IMR-90 (cell line): ENCODE measurements at regions of chr9 and their contacts with region 1.

Region 1: DNA sequence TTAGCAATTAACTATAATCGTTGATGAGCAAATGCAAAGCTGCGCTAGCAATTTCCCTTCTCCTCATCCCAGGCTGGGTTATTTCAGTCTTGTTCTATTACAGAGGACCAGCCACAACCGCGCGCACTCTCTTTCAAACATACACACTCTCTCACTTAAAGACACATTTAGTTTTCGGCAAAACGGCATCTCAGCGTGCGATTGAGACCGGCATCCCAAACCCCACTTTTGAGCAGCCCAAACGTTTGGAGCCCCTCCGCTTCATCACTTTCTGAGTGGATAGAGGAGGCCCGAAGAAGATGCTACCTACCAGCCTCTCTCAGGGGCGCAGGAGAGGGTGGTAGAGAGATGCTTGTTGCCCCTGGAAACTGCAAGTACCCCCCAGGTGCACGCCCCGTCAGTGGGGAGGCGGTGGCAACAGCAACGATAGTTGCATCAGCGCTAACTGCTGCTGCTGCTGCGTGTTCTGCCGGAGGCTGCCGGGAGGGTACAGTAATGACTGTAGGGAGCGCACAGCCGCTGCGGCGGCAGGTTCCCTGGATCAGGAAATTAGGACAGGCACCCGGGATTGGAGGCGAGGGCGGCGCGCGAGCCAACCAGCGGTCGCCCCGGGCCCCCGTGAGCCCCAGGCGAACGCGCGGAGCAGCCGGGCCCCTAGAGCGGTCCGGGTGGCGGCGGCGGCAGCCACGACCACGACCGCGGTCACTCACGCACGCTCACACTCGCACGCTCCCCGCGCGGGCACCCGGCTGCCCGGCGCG is 488 bp upstream of the VLDLR start:
- DNase-seq: peak; percentile 87
- ATAC-seq: peak; percentile 88
- H3K4me3 ChIP-seq: peak overlapping the region; percentile 79
- H3K27ac ChIP-seq: peak overlapping the region; percentile 70
- H3K4me1 ChIP-seq: peaks cover 2% of the 10 kb centered on the region; the same call in 1 of the 2 replicates
- H3K27me3 ChIP-seq: no peaks in the 10 kb centered on the region
- CTCF ChIP-seq: peak; percentile 30
- POLR2A ChIP-seq: peak; percentile 64
- RAD21 ChIP-seq: peak; percentile 42

Region 2: DNA sequence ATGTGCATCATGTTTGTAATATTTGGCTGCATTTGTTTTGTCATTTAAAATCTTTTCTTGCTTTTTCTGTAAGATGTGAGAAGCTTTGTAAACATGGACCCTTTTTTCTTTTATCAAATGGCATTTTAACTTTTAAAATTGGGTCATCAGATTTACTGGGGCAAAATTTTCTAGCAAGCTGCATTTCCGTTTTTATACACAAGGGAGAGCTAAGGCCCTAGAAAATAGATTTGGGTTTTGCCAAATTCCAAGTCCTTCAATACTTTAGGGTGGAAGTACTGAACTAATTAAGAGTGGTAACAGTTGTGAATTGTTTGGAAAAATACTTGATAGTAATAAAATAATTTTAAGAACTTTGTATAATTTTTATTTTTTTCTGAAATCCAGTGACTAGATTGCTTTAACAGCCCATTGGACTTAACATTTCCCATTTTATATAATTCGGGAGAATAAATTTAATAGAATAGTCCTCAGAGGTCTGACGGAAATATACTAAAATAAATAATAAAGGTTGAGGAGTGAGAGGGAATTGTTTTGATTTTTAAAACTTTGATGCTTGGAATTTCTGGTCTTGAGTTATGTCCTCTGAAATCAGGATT is 488.5 kb before region 1 on chr9:
- CTCF ChIA-PET with region 1: no interaction called
- POLR2A ChIA-PET with region 1: no interaction called
- dilution Hi-C with region 1: no loop called
- in situ Hi-C with region 1: no loop called
- intact Hi-C with region 1: loop called (anchors 2 kb)
- DNase-seq: peak; percentile 54
- ATAC-seq: peak; percentile 73
- H3K4me3 ChIP-seq: no peak overlapping the region
- H3K27ac ChIP-seq: no peak overlapping the region
- H3K4me1 ChIP-seq: peaks cover 4% of the 10 kb centered on the region; the same call in 1 of the 2 replicates
- H3K27me3 ChIP-seq: no peaks in the 10 kb centered on the region
- CTCF ChIP-seq: peak; percentile 71
- POLR2A ChIP-seq: no peak
- RAD21 ChIP-seq: peak; percentile 85

Region 3: DNA sequence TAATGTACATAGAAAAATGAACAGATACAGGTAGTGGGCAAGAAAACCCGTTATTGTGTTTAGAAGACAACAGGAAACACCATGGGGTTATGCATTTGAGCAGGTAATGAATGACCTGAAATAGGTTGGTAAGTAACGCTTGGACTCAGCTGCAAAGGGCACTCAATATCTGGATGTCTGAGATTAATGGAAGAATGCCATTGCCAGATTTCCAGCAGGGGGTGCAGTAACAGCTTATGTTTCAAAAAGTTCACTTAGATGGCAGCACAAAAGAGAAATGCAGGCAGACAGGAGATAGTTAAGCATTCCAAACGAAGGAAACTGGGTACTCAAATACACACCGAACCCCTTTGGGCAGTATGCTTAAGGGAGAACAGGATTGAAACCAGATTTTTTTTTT is 285.0 kb before region 1 on chr9:
- CTCF ChIA-PET with region 1: no interaction called
- POLR2A ChIA-PET with region 1: no interaction called
- dilution Hi-C with region 1: no loop called
- in situ Hi-C with region 1: no loop called
- intact Hi-C with region 1: loop called (anchors 5 kb)
- DNase-seq: peak; percentile 1
- ATAC-seq: no peak
- H3K4me3 ChIP-seq: no peak overlapping the region
- H3K27ac ChIP-seq: no peak overlapping the region
- H3K4me1 ChIP-seq: no peaks in the 10 kb centered on the region
- H3K27me3 ChIP-seq: no peaks in the 10 kb centered on the region
- CTCF ChIP-seq: no peak
- POLR2A ChIP-seq: no peak
- RAD21 ChIP-seq: no peak

Region 4: GRCh38 chr9:2494562-2494961 is 126.5 kb before region 1 on chr9:
- CTCF ChIA-PET with region 1: no interaction called
- POLR2A ChIA-PET with region 1: no interaction called
- dilution Hi-C with region 1: no loop called
- in situ Hi-C with region 1: no loop called
- intact Hi-C with region 1: loop called (anchors 1 kb)
- DNase-seq: peak; percentile 88
- ATAC-seq: peak; percentile 94
- H3K4me3 ChIP-seq: no peak overlapping the region
- H3K27ac ChIP-seq: peak overlapping the region; percentile 76; the same call in 1 of the 2 replicates
- H3K4me1 ChIP-seq: peaks cover 12% of the 10 kb centered on the region
- H3K27me3 ChIP-seq: no peaks in the 10 kb centered on the region
- CTCF ChIP-seq: no peak
- POLR2A ChIP-seq: no peak
- RAD21 ChIP-seq: 0 out of 2 replicates have a peak, but pooled peaks have one; percentile 11

Region 5: GRCh38 chr9:2727966-2728613 is 107.0 kb after region 1 on chr9:
- CTCF ChIA-PET with region 1: interaction called, 3 read pairs
- POLR2A ChIA-PET with region 1: no interaction called
- dilution Hi-C with region 1: no loop called
- in situ Hi-C with region 1: no loop called
- intact Hi-C with region 1: loop called (anchors 2 kb)
- DNase-seq: peak; percentile 71
- ATAC-seq: peak; percentile 90
- H3K4me3 ChIP-seq: no peak overlapping the region
- H3K27ac ChIP-seq: no peak overlapping the region
- H3K4me1 ChIP-seq: peaks cover 8% of the 10 kb centered on the region
- H3K27me3 ChIP-seq: no peaks in the 10 kb centered on the region
- CTCF ChIP-seq: peak; percentile 71
- POLR2A ChIP-seq: no peak
- RAD21 ChIP-seq: peak; percentile 64